ENCODE measurements at regions of chr20 and their contacts with region 1.

Region 1: GRCh38 chr20:41411391-41411847 is 44.8 kb upstream of the EMILIN3 start:
- DNase-seq: no peak
- H3K4me3 ChIP-seq: no peak overlapping the region
- H3K27ac ChIP-seq: no peak overlapping the region
- H3K27me3 ChIP-seq: no peaks in the 10 kb centered on the region
- CTCF ChIP-seq: peak; percentile 55

Region 2: GRCh38 chr20:41136680-41137613 is 274.5 kb before region 1 on chr20 and contains the start of gene PLCG1:
- CTCF ChIA-PET with region 1: interaction called, 21 read pairs
- POLR2A ChIA-PET with region 1: no interaction called
- DNase-seq: peak; percentile 32
- H3K4me3 ChIP-seq: peak within 1 kb of the TSS; percentile 75
- H3K27ac ChIP-seq: peak within 1 kb of the TSS; percentile 78
- H3K27me3 ChIP-seq: no peaks in the 10 kb centered on the region
- CTCF ChIP-seq: no peak
- polyA plus RNA-seq, gene PLCG1: 54.6 and 71.8 TPM in 2 replicates

Region 3: DNA sequence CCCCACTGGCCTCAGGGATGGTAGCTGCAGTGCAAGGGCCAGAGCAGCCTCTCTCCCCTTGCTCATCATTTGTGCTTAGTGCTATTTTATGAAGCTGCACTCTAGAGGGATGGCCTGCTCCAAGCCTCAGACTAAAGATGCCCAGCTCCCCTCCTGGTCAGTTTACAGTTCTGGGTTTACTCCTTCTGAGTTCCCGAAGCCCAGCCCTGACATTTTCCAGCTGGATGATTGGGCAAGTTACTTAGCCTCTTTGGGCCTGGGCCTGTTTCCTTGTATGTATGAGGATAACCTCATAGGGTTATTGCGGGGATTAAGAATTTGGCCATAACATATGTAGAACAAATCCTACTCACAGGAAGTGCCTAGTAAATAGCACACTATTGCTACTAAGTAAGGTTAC is 13.0 kb before region 1 on chr20:
- CTCF ChIA-PET with region 1: interaction called, 19 read pairs
- POLR2A ChIA-PET with region 1: no interaction called
- DNase-seq: peak; percentile 75
- H3K4me3 ChIP-seq: no peak overlapping the region
- H3K27ac ChIP-seq: peak overlapping the region; percentile 65
- H3K27me3 ChIP-seq: no peaks in the 10 kb centered on the region
- CTCF ChIP-seq: peak; percentile 22; the same call in 1 of the 2 replicates

Region 4: DNA sequence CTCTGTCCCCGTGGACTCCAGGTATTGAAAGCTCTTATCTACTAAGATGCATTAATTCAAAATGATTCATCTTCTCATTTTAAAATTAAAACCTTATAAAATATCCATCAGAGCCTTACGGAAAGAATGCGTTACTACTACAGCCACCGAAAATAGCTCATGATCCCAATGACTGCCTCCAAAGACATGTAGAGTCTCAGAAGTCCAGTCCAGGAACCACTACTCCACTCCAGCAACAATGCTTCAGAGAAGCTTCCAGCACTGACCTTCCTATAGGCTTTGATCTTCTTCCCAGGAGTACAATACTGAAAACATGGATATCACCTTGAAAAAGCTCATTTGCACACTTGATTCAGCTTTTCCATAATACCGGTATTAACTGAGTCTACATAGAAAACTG is 112.4 kb after region 1 on chr20:
- CTCF ChIA-PET with region 1: no interaction called
- POLR2A ChIA-PET with region 1: no interaction called
- DNase-seq: no peak
- H3K4me3 ChIP-seq: no peak overlapping the region
- H3K27ac ChIP-seq: no peak overlapping the region
- H3K27me3 ChIP-seq: no peaks in the 10 kb centered on the region
- CTCF ChIP-seq: no peak

Measured in AG04450 (cell line).